ENCODE measurements at regions of chr14 and their contacts with region 1.

Region 1: DNA sequence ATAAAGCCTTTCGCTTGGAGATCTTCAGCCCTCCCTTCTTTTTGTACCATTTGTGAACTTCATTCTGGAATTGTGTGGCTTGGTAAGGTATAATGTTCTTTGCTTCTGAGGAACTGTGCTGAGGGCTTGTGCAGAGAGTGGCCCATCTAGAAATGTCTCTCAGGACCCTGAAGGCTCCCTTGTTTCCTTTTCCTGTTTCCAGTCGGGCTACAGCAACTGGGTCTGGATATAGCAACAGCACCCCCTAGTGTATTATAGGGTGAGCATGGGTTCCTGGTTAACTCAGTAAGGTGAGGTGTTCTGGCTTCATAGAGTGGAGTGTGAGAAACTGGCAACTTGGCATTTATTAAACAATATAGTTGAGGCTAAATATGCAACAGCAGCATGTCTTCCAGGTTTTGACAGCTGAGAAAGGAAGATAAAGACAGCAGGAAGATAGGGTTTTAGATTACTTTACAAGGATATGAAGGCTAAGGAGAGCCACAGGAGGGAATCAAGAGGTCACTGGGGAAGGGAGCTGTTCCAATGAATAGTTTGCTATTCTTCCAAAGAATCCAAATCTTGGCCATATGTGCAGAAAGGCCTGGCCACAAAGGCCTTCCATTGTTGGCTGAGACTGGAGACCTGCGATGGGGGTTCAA is 49.1 kb upstream of the RNU6-8 start:
- DNase-seq: peak; percentile 76
- H3K4me3 ChIP-seq: no peak overlapping the region; a peak in 1 of 4 replicates
- H3K27ac ChIP-seq: 0 out of 4 replicates have a peak overlapping the region, but pooled peaks of 1 of the 2 experiments have one; percentile 16
- H3K4me1 ChIP-seq: peaks cover 0 to 7% of the 10 kb centered on the region in 2 experiments; a peak in 2 of 4 replicates
- H3K27me3 ChIP-seq: no peaks in the 10 kb centered on the region
- CTCF ChIP-seq: peak; percentile 92
- EP300 ChIP-seq: no peak
- RAD21 ChIP-seq: peak; percentile 97

Region 2: DNA sequence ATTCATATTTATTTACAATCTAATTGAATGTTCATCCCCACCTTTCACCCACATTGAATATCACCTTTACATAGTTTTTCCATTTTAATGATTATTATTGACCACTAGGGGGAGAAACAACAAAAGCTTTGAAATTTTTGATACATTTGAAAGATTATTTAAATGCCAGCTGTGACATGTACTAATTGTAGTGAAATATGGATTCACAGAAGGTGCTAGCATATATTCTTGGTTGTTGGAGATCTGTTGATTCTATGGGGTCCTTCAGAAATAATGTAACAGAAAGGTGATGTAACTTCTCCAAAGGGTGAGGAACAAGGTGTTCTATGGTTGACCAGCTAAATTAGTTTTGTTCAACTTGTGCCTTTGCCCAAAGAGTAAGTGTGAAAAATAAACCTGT is 741.9 kb before region 1 on chr14:
- CTCF ChIA-PET with region 1: interaction called, 44 read pairs
- POLR2A ChIA-PET with region 1: no interaction called
- DNase-seq: peak; percentile 33
- H3K4me3 ChIP-seq: no peak overlapping the region
- H3K27ac ChIP-seq: no peak overlapping the region
- H3K4me1 ChIP-seq: no peaks in the 10 kb centered on the region
- H3K27me3 ChIP-seq: no peaks in the 10 kb centered on the region
- CTCF ChIP-seq: peak; percentile 79
- EP300 ChIP-seq: no peak
- RAD21 ChIP-seq: peak; percentile 75

Region 3: GRCh38 chr14:31934767-31935266 is 317.3 kb before region 1 on chr14:
- CTCF ChIA-PET with region 1: interaction called, 72 read pairs
- POLR2A ChIA-PET with region 1: no interaction called
- DNase-seq: peak; percentile 33
- H3K4me3 ChIP-seq: no peak overlapping the region
- H3K27ac ChIP-seq: no peak overlapping the region
- H3K4me1 ChIP-seq: peaks cover 0 to 12% of the 10 kb centered on the region in 2 experiments; a peak in 2 of 4 replicates
- H3K27me3 ChIP-seq: no peaks in the 10 kb centered on the region
- CTCF ChIP-seq: peak; percentile 59
- EP300 ChIP-seq: no peak
- RAD21 ChIP-seq: peak; percentile 77

Region 4: GRCh38 chr14:32224737-32225377 is 27.3 kb before region 1 on chr14:
- CTCF ChIA-PET with region 1: interaction called, 12 read pairs
- POLR2A ChIA-PET with region 1: no interaction called
- DNase-seq: peak; percentile 80
- H3K4me3 ChIP-seq: no peak overlapping the region
- H3K27ac ChIP-seq: peak overlapping the region; percentile 66 to 96
- H3K4me1 ChIP-seq: peaks cover 4 to 24% of the 10 kb centered on the region in 2 experiments; a peak in 3 of 4 replicates
- H3K27me3 ChIP-seq: no peaks in the 10 kb centered on the region
- CTCF ChIP-seq: peak; percentile 61
- EP300 ChIP-seq: peak; percentile 71 to 91
- RAD21 ChIP-seq: peak; percentile 39

Region 5: GRCh38 chr14:32417956-32418552 is 165.9 kb after region 1 on chr14:
- CTCF ChIA-PET with region 1: no interaction called
- POLR2A ChIA-PET with region 1: no interaction called
- DNase-seq: no peak
- H3K4me3 ChIP-seq: no peak overlapping the region
- H3K27ac ChIP-seq: peak overlapping the region; percentile 94 to 95
- H3K4me1 ChIP-seq: peaks cover 32 to 37% of the 10 kb centered on the region in 2 experiments; a peak in 3 of 4 replicates
- H3K27me3 ChIP-seq: no peaks in the 10 kb centered on the region
- CTCF ChIP-seq: no peak
- EP300 ChIP-seq: peak; percentile 79 to 91
- RAD21 ChIP-seq: no peak

Region 6: DNA sequence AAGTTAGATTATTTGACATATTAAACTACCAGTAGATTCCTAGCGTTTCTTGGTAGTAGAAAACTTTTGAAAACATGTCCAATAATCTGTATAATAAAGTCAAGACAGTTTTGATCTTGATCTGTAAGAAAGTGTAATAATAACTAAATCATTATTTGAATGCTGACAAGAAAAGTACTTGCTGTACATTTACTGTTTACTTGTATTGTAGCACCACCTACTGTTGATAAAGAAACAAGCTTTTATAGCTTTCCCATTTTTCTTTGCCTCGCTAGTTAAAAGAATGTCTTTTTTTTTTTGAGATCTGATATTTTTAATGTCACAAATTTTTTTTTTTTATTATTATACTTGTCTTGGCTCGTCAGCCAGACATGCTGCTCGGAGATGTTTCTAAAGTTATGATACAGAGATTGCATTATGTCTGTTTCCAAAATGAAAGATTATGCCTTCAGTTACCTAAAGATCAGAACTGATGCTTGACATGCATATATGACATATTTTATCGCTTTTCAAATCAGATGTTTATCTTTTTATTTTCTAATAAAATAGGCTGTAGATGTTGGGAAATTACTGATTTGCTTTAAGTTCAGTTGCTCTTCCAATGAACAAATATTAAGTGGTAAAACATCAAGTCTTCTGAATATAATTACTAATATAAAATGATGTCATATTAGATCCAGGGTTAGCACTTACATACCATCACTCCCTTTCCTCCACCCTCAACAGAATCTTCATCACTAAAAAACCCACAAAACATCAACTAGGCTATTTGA is 217.4 kb after region 1 on chr14:
- CTCF ChIA-PET with region 1: interaction called, 64 read pairs
- POLR2A ChIA-PET with region 1: no interaction called
- DNase-seq: no peak
- H3K4me3 ChIP-seq: peak overlapping the region in 1 of 2 experiments; percentile 3; a peak in 1 of 4 replicates
- H3K27ac ChIP-seq: peak overlapping the region; percentile 90 to 98
- H3K4me1 ChIP-seq: peaks cover 11 to 48% of the 10 kb centered on the region in 2 experiments
- H3K27me3 ChIP-seq: no peaks in the 10 kb centered on the region
- CTCF ChIP-seq: peak; percentile 84
- EP300 ChIP-seq: no peak
- RAD21 ChIP-seq: peak; percentile 83

Measured in SK-N-SH (cell line).